ENCODE measurements at regions of chr6 and their contacts with region 1.

Region 1: GRCh38 chr6:33983105-33983716 is 162.7 kb downstream of the GRM4 start:
- DNase-seq: no peak
- ATAC-seq: 0 out of 2 replicates have a peak, but pooled peaks have one; percentile 35
- H3K4me3 ChIP-seq: no peak overlapping the region
- H3K27ac ChIP-seq: no peak overlapping the region
- H3K4me1 ChIP-seq: peaks cover 18% of the 10 kb centered on the region
- H3K27me3 ChIP-seq: no peaks in the 10 kb centered on the region
- CTCF ChIP-seq: no peak

Region 2: DNA sequence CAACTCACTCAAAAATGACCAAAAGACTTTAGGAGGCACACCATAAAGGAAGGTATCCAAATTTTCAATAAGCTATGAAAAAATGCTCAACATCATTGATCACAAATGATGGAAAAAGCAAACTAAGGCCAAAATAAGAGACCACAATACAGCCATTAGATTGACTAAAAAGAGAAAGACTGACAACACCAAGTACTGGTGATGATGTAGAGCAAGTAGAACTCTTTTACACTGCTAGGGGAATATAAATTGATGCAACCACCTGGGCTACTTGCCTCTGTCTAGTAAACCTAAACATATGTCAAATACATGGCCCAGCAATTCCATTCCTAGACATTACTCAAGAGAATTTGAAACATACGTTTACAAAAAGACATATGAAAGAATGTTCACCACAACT is 14.1 kb after region 1 on chr6:
- CTCF ChIA-PET with region 1: no interaction called
- POLR2A ChIA-PET with region 1: interaction called, 10 read pairs
- in situ Hi-C with region 1: no loop called
- intact Hi-C with region 1: no loop called
- DNase-seq: no peak
- ATAC-seq: no peak
- H3K4me3 ChIP-seq: no peak overlapping the region
- H3K27ac ChIP-seq: no peak overlapping the region
- H3K4me1 ChIP-seq: no peaks in the 10 kb centered on the region
- H3K27me3 ChIP-seq: no peaks in the 10 kb centered on the region
- CTCF ChIP-seq: no peak

Measured in Panc1 (cell line).